ENCODE measurements at regions of chr12 and their contacts with region 1.

Region 1: GRCh38 chr12:6355491-6356371 is 13.9 kb upstream of the TNFRSF1A start:
- DNase-seq: peak; percentile 73
- ATAC-seq: peak; percentile 96
- H3K4me3 Mint-ChIP-seq: no peak overlapping the region
- H3K27ac Mint-ChIP-seq: peak overlapping the region; percentile 34; the same call in 1 of the 2 replicates
- H3K4me1 Mint-ChIP-seq: peaks cover 25% of the 10 kb centered on the region
- H3K27me3 Mint-ChIP-seq: no peaks in the 10 kb centered on the region
- CTCF ChIP-seq: no peak

Region 2: GRCh38 chr12:6285063-6285477 is 70.7 kb before region 1 on chr12:
- CTCF ChIA-PET with region 1: no interaction called
- POLR2A ChIA-PET with region 1: no interaction called
- DNase-seq: peak; percentile 73
- ATAC-seq: peak; percentile 88
- H3K4me3 Mint-ChIP-seq: no peak overlapping the region
- H3K27ac Mint-ChIP-seq: no peak overlapping the region
- H3K4me1 Mint-ChIP-seq: peaks cover 20% of the 10 kb centered on the region
- H3K27me3 Mint-ChIP-seq: peaks cover 5% of the 10 kb centered on the region
- CTCF ChIP-seq: peak; percentile 95

Region 3: DNA sequence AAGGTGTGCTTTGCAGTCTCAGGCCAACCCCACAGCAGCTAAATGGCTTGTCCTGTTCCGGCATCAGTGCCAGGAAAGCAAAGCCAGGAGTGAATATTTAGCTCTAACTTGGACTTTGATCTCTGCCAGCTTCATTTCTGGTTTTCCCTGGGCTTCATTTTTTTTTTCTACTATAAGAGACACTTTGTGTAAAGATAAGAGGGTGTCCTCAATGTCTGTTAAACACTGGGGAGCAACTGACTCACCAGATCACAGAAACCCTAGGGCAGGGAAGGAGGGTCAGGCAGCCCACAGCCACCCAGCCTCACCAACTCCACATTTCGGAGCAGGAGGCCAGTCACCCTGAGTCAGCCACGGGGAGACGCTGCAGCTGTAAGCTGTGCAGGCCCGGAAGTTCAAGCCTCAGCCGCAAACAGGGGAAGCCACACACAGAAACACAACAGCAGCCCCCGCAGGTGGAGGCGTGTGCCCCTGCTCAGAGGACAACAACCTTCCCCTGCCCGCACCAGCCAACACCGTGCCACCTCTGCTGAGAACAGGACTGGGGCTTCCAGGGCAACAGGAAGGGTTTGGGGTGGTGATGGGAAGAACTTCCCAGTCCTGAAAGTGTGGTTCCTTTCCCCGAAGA is 20.2 kb before region 1 on chr12:
- CTCF ChIA-PET with region 1: interaction called, 39 read pairs
- POLR2A ChIA-PET with region 1: interaction called, 7 read pairs
- DNase-seq: peak; percentile 51
- ATAC-seq: peak; percentile 10
- H3K4me3 Mint-ChIP-seq: no peak overlapping the region; the same call in none of the 2 replicates
- H3K27ac Mint-ChIP-seq: no peak overlapping the region
- H3K4me1 Mint-ChIP-seq: peaks cover 18% of the 10 kb centered on the region
- H3K27me3 Mint-ChIP-seq: no peaks in the 10 kb centered on the region
- CTCF ChIP-seq: no peak

Region 4: GRCh38 chr12:6341417-6342139 is 14.2 kb before region 1 on chr12 and contains the start of gene TNFRSF1A:
- CTCF ChIA-PET with region 1: interaction called, 39 read pairs
- POLR2A ChIA-PET with region 1: interaction called, 8 read pairs
- DNase-seq: no peak
- ATAC-seq: peak; percentile 47
- H3K4me3 Mint-ChIP-seq: no peak within 1 kb of the TSS
- H3K27ac Mint-ChIP-seq: peak within 1 kb of the TSS; percentile 86
- H3K4me1 Mint-ChIP-seq: peaks cover 32% of the 10 kb centered on the region
- H3K27me3 Mint-ChIP-seq: no peaks in the 10 kb centered on the region
- CTCF ChIP-seq: no peak
- total RNA-seq, gene TNFRSF1A: 32.3 to 44.1 TPM (median 32.4 TPM) in 3 replicates

Region 5: DNA sequence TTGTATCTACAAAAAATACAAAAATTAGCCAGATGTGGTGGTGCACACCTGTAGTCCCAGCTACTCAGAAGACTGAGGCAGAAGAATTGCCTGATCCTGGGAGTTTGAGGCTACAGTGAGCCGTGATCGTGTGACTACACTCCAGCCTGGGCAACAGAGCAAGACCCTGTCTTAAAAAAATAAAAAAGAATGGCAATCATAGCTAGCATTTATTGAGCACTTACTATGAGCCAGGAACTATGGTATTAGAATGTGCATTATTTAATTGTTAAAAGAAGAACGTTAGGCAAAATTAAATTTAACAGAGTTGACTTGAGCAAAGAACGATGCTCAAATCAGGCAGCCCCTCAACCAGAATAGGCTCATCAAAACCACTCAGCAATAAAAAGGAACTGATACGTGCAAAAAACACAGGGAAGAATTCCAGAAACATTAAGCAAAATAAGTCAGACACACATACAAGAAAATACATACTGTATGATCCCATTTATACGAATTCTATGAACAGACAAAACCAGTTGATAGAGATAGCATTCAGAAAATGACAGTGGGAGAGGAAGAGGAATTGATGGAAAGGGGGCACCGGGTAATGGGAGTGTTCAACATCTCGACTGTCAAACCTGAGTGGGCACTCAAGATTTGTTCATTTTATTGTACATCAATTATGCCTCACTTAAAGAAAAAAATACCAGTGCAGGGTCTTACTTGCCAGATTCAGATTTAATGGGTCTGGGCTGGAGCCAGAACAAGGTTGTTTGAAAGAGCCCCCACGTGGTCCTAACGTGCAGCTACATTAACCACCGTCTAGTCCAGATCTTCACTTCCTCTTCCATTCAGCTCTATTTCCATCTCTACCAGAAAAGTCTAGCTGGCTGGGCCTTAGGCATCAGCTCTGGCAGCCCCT is 11.6 kb after region 1 on chr12:
- CTCF ChIA-PET with region 1: interaction called, 68 read pairs
- POLR2A ChIA-PET with region 1: interaction called, 9 read pairs
- DNase-seq: no peak
- ATAC-seq: no peak
- H3K4me3 Mint-ChIP-seq: no peak overlapping the region
- H3K27ac Mint-ChIP-seq: peak overlapping the region; percentile 33; the same call in 1 of the 2 replicates
- H3K4me1 Mint-ChIP-seq: peaks cover 58% of the 10 kb centered on the region
- H3K27me3 Mint-ChIP-seq: no peaks in the 10 kb centered on the region
- CTCF ChIP-seq: no peak

Measured in WTC11 (cell line).